Naive thymus-derived CD4-positive, alpha-beta T cell (primary cell): ENCODE measurements at regions of chr3 and their contacts with region 1.

Region 1: GRCh38 chr3:50298836-50299637 is at the starts of genes HYAL3 and NAA80:
- DNase-seq: peak; percentile 94 to 100 (median 99)
- ATAC-seq: peak; percentile 93
- H3K4me3 ChIP-seq: peak within 1 kb of the TSS; percentile 97
- H3K4me3 Mint-ChIP-seq: peak within 1 kb of the TSS; percentile 84 to 99 (median 97)
- H3K27ac ChIP-seq: peak within 1 kb of the TSS; percentile 86
- H3K27ac Mint-ChIP-seq: peak within 1 kb of the TSS; percentile 90 to 100 (median 99)
- H3K4me1 ChIP-seq: peaks cover 19 to 20% of the 10 kb centered on the region in 2 donors
- H3K4me1 Mint-ChIP-seq: peaks cover 12 to 36% (median 22%) of the 10 kb centered on the region in 7 donors
- H3K27me3 ChIP-seq: no peaks in the 10 kb centered on the region
- H3K27me3 Mint-ChIP-seq: no peaks in the 10 kb centered on the region
- total RNA-seq, gene HYAL3: 3.4 to 10.7 (median 4.2) TPM
- total RNA-seq, gene NAA80: 30.2 to 44.9 (median 33.6) TPM

Region 2: GRCh38 chr3:49021813-49022687 is 1277.0 kb before region 1 on chr3 and contains the start of gene NDUFAF3:
- CTCF ChIA-PET with region 1: no interaction called
- POLR2A ChIA-PET with region 1: interaction called, 3 read pairs
- intact Hi-C with region 1: loop called in 1 of 2 experiments (anchors 5 kb)
- DNase-seq: peak; percentile 84 to 96 (median 89)
- ATAC-seq: peak; percentile 89
- H3K4me3 ChIP-seq: peak within 1 kb of the TSS; percentile 99
- H3K4me3 Mint-ChIP-seq: peak within 1 kb of the TSS; percentile 92 to 99 (median 97)
- H3K27ac ChIP-seq: peak within 1 kb of the TSS; percentile 98
- H3K27ac Mint-ChIP-seq: peak within 1 kb of the TSS; percentile 95 to 99 (median 98)
- H3K4me1 ChIP-seq: peaks cover 24 to 25% of the 10 kb centered on the region in 2 donors
- H3K4me1 Mint-ChIP-seq: peaks cover 21 to 61% (median 47%) of the 10 kb centered on the region in 7 donors
- H3K27me3 ChIP-seq: no peaks in the 10 kb centered on the region
- H3K27me3 Mint-ChIP-seq: peaks cover 0 to 2% (median 0%) of the 10 kb centered on the region in 5 donors
- total RNA-seq, gene NDUFAF3: 63.8 to 110 (median 89.3) TPM

Region 3: DNA sequence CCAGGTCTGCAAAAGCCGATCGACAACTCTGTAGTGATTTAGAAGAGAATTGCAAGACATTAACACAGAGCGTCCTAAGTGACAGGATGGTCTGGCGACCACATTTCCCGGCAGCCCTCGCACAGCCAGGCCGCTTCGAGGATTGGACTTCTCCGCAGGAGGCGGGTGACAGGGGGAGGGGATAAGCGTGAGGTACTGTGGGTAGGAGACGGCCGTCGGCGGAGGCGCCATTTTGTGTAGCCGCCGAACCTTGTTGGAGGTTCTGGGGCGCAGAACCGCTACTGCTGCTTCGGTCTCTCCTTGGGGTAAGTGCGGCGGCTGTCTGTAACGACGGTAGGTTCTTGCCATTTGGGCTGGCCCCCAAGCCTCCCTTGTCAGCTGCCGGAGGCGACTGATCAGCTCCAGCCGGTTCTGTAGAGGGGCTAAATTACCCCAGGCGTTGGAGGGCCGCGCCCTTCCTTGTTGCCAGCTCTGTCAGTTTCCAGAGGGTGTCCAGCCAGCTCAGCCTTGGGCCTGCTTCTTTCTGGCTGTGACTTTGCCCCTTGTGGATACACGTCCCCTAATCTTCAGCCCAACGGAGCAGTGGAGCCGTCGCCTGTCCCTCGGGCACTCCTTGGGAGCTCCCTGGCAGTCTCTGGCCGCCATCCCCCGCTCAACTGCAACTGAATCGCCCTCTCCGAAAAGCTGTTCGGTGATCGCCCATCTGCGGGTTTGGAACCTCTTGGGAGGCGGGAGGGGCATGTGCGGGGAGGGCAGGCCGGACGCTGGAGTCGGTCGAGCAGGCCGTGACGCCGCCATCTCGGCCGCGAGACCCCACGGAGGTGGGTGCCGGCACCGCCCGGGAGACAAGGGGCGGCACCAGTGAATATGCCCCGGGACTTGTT is 210.1 kb before region 1 on chr3 and contains the start of gene RBM5:
- CTCF ChIA-PET with region 1: no interaction called
- POLR2A ChIA-PET with region 1: no interaction called
- intact Hi-C with region 1: loop called in 1 of 2 experiments (anchors 10 kb)
- DNase-seq: peak; percentile 71 to 91 (median 89)
- ATAC-seq: peak; percentile 100
- H3K4me3 ChIP-seq: peak within 1 kb of the TSS; percentile 88
- H3K4me3 Mint-ChIP-seq: peak within 1 kb of the TSS; percentile 94 to 98 (median 96)
- H3K27ac ChIP-seq: peak within 1 kb of the TSS; percentile 98
- H3K27ac Mint-ChIP-seq: peak within 1 kb of the TSS; percentile 94 to 99 (median 97)
- H3K4me1 ChIP-seq: peaks cover 16 to 23% of the 10 kb centered on the region in 2 donors
- H3K4me1 Mint-ChIP-seq: peaks cover 24 to 36% (median 32%) of the 10 kb centered on the region in 7 donors
- H3K27me3 ChIP-seq: no peaks in the 10 kb centered on the region
- H3K27me3 Mint-ChIP-seq: no peaks in the 10 kb centered on the region
- total RNA-seq, gene RBM5: 223 to 420 (median 342) TPM

Region 4: DNA sequence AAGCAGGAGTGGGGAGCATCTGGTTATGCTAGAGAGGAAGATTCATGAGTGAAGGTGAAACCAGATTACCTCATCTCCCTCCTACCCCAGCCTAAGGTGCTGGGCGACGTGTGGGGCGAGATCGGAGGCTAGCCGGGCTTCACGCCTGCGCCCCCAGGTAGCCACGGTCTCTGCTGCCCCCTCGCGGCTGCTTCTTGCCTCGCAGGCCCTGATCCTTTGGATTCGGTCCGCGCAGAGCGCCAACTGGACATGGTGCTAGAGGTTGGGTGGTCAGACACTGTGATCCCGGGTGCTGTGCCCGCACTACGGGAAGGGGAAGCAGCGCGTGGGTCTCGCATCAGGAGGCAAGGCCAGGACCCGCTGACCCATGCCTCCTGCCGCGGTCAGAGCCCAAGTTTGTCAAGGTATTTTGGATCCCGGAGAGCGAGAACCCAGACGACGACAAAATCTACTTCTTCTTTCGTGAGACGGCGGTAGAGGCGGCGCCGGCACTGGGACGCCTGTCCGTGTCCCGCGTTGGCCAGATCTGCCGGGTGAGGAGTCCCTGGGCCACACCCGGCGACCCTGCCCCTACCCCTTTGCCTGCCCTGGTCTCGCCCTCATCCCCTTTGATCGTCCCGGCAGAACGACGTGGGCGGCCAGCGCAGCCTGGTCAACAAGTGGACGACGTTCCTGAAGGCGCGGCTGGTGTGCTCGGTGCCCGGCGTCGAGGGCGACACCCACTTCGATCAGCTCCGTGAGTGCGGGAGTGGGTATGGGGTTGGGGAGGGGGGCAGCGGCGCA is 25.9 kb before region 1 on chr3:
- CTCF ChIA-PET with region 1: interaction called, 3 read pairs
- POLR2A ChIA-PET with region 1: no interaction called
- intact Hi-C with region 1: loop called in 1 of 2 experiments (anchors 1 kb)
- DNase-seq: peak; percentile 65 to 95 (median 80)
- ATAC-seq: peak; percentile 92
- H3K4me3 ChIP-seq: peak overlapping the region; percentile 48
- H3K4me3 Mint-ChIP-seq: peak overlapping the region; percentile 59 to 88 (median 76)
- H3K27ac ChIP-seq: no peak overlapping the region
- H3K27ac Mint-ChIP-seq: peak overlapping the region in 5 of 9 donors; percentile 20 to 82 (median 72)
- H3K4me1 ChIP-seq: peaks cover 10 to 22% of the 10 kb centered on the region in 2 donors
- H3K4me1 Mint-ChIP-seq: peaks cover 21 to 31% (median 26%) of the 10 kb centered on the region in 7 donors
- H3K27me3 ChIP-seq: peaks cover 15 to 23% of the 10 kb centered on the region in 2 donors
- H3K27me3 Mint-ChIP-seq: peaks cover 21 to 50% (median 29%) of the 10 kb centered on the region in 5 donors

Region 5: DNA sequence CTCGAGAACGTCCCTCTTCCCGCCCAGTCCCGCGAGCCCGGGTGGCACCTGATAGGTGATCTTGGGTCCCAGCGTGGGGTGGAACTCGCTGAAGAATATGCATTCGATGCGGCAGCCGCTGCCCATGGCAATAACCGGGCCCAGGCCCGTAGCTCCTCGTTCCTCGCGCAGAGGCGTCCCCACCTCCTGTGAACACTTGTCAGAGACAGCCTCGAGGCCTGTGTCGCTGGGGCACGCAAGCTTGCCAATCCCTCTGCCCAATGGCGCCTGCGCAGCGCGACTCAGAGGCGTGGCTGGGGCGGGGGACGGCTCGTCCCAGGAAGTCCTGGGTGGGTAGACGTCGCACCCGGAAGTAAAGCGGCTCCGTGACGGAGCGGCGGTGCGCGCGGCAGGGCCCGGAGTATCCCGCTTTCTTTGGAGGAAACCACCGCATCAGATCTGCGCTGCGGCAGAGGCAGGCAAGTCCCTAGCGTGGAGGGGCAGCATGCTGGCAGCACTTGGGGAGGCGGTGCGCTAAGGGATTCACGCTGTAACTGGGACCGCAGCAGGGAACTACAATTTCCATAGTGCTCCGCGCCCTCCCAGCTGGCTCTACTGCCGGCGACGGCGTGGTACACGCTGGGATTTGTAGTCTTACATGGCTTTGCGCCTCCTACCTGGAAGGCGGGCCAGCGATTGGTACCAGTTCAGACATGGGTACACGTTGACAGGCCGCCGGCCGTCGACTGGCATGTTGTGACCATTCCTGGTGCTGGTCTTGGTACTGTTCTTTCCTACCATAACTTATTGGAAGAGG is 51.7 kb after region 1 on chr3 and contains the starts of genes CYB561D2 and NPRL2:
- CTCF ChIA-PET with region 1: interaction called, 3 read pairs
- POLR2A ChIA-PET with region 1: interaction called, 24 read pairs
- intact Hi-C with region 1: loop called (anchors 1 kb)
- DNase-seq: peak; percentile 97 to 100 (median 99)
- ATAC-seq: peak; percentile 95
- H3K4me3 ChIP-seq: peak within 1 kb of the TSS; percentile 90
- H3K4me3 Mint-ChIP-seq: peak within 1 kb of the TSS; percentile 86 to 99 (median 96)
- H3K27ac ChIP-seq: peak within 1 kb of the TSS; percentile 93
- H3K27ac Mint-ChIP-seq: peak within 1 kb of the TSS; percentile 96 to 100 (median 99)
- H3K4me1 ChIP-seq: peaks cover 26 to 32% of the 10 kb centered on the region in 2 donors
- H3K4me1 Mint-ChIP-seq: peaks cover 24 to 78% (median 59%) of the 10 kb centered on the region in 7 donors
- H3K27me3 ChIP-seq: no peaks in the 10 kb centered on the region
- H3K27me3 Mint-ChIP-seq: no peaks in the 10 kb centered on the region
- total RNA-seq, gene CYB561D2: 23.3 to 42.6 (median 32.8) TPM
- total RNA-seq, gene NPRL2: 35.3 to 48.9 (median 47.7) TPM

Region 6: DNA sequence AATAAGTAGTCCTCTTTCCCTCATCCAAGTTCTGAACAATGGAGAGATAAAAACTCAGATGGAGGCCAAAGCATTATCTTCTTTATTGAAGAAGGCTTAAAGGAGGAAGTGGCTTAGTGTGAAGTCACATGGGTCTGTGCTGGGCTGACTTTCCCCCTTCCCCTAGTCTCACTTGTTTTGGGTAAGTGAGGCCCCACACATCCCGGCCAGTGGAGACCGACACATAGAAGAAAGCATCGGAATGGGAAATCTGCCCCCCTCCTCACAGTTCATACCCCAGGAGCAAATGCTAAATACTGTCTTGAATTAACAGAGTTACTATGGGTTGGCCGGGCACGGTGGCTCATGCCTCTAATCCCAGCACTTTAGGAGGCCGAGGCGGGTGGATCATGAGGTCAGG is 366.6 kb after region 1 on chr3:
- CTCF ChIA-PET with region 1: no interaction called
- POLR2A ChIA-PET with region 1: no interaction called
- intact Hi-C with region 1: no loop called
- DNase-seq: no peak
- ATAC-seq: peak; percentile 38
- H3K4me3 ChIP-seq: no peak overlapping the region
- H3K4me3 Mint-ChIP-seq: no peak overlapping the region
- H3K27ac ChIP-seq: no peak overlapping the region
- H3K27ac Mint-ChIP-seq: no peak overlapping the region
- H3K4me1 ChIP-seq: peaks cover 0 to 4% of the 10 kb centered on the region in 2 donors
- H3K4me1 Mint-ChIP-seq: peaks cover 4 to 14% (median 10%) of the 10 kb centered on the region in 7 donors
- H3K27me3 ChIP-seq: no peaks in the 10 kb centered on the region
- H3K27me3 Mint-ChIP-seq: peaks cover 0 to 9% (median 0%) of the 10 kb centered on the region in 5 donors

Region 7: DNA sequence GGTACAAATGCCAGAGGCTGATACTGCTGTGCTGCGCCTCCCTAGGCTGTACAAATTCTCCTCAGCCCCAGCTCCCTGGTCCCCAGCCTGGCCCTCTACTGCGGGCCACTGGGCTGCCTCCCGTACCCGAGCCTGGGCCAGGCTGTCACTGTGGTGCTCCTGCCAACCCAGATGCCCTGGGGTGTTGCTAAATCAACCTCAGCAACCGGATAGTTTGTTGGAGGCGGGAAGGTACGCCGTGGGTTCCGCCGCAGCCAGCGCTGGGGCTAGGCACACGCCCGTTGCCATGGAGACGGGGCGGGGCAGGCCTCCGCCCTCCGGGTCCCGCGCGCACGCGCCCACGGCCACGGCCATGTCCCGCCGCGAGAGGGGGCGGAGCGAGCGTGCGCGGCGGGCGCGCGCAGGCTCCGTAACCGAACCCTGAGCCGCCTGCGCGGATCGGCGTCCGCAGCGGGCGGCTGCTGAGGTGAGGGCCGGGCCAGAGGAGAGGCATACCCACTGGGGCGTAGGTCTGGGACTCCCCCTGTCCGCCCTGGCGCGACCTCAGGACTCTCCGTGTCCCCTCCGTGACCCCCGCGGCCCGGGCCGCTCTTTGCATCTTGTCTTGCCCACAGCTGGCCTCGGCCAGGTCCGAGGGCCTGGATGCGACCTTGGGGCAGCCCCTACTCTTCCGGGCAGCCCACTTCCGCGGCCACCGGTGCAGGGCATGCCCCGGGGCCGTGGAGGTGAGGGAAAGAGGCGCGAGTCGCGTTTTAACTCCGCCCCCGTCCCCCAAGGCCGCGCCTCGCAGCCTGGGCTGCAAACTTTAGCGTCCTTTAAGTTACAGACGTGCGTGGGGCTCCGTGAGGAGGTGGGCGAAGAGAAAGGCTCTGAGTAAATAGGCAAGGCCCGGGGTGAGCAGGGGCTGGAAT is 1372.0 kb after region 1 on chr3 and contains the start of gene TEX264:
- CTCF ChIA-PET with region 1: no interaction called
- POLR2A ChIA-PET with region 1: no interaction called
- intact Hi-C with region 1: loop called in 1 of 2 experiments (anchors 5 kb)
- DNase-seq: peak; percentile 90 to 98 (median 95)
- ATAC-seq: peak; percentile 90
- H3K4me3 ChIP-seq: peak within 1 kb of the TSS; percentile 94
- H3K4me3 Mint-ChIP-seq: peak within 1 kb of the TSS; percentile 89 to 95 (median 92)
- H3K27ac ChIP-seq: peak within 1 kb of the TSS; percentile 85
- H3K27ac Mint-ChIP-seq: peak within 1 kb of the TSS; percentile 24 to 97 (median 93)
- H3K4me1 ChIP-seq: peaks cover 53 to 60% of the 10 kb centered on the region in 2 donors
- H3K4me1 Mint-ChIP-seq: peaks cover 59 to 82% (median 73%) of the 10 kb centered on the region in 7 donors
- H3K27me3 ChIP-seq: no peaks in the 10 kb centered on the region
- H3K27me3 Mint-ChIP-seq: no peaks in the 10 kb centered on the region
- total RNA-seq, gene TEX264: 34.4 to 65.0 (median 41.7) TPM